Dorsolateral prefrontal cortex (tissue), 120 donors: ENCODE measurements at regions of chr2 and their contacts with region 1.

Region 1: DNA sequence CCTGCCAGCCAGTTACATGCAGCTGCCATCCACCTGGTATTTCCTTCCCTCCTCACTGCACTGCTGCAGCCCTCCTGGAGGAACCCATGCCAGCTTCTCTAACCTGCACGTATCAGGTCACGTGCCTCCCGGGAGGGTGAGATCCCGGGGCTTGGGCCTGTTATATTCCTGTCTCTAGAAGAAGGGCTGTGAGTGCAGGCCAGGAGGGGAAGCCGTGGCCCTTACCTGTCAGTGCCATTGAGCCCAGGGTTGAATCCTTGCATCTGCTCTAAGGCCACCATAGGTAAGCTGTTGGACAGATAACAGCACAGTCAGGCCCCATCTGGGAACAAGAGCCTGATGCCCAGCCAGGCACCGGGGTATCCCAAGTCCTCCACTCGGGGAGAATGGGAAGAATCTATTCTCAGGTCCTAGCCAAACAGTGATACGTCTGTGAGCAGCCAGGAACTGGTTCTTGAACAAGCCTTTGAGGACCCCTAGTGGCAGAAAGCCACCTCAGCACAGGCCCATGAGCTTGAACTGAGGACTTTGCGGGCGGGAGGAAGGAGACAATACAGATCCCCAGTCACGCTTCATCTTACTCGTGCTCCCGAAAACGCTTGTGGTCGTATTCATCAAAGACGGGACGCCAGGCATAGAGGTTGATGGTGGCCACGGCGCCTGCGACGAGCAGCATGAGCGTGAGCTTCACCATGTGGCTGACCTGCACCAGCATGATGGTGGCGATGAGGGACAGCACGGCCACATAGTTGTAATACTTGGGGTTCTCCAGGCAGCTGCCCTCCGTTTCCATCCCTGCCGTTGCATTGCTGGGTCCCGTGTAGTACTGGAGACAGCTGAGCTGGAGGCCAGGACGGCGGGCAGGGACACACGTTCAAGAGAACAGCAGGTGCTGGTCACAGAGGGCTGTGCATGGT is 34.4 kb downstream of the CENPO start:
- DNase-seq: peak; percentile 71 to 94 (median 86)
- H3K4me3 ChIP-seq: peak overlapping the region in 32 of 59 donors; percentile 4 to 50 (median 22)
- H3K27ac ChIP-seq: peak overlapping the region in 53 of 59 donors; percentile 1 to 85 (median 66)
- H3K27me3 ChIP-seq: no peaks in the 10 kb centered on the region
- CTCF ChIP-seq: peak; percentile 77 to 96 (median 91)

Region 2: GRCh38 chr2:24409700-24410556 is 417.7 kb before region 1 on chr2:
- intact Hi-C with region 1: loop called (anchors 1 to 5 kb)
- DNase-seq: peak in 3 of 10 donors; percentile 30 to 58 (median 43)
- H3K4me3 ChIP-seq: no peak overlapping the region
- H3K27ac ChIP-seq: no peak overlapping the region
- H3K27me3 ChIP-seq: no peaks in the 10 kb centered on the region
- CTCF ChIP-seq: peak; percentile 59 to 94 (median 86)

Region 3: DNA sequence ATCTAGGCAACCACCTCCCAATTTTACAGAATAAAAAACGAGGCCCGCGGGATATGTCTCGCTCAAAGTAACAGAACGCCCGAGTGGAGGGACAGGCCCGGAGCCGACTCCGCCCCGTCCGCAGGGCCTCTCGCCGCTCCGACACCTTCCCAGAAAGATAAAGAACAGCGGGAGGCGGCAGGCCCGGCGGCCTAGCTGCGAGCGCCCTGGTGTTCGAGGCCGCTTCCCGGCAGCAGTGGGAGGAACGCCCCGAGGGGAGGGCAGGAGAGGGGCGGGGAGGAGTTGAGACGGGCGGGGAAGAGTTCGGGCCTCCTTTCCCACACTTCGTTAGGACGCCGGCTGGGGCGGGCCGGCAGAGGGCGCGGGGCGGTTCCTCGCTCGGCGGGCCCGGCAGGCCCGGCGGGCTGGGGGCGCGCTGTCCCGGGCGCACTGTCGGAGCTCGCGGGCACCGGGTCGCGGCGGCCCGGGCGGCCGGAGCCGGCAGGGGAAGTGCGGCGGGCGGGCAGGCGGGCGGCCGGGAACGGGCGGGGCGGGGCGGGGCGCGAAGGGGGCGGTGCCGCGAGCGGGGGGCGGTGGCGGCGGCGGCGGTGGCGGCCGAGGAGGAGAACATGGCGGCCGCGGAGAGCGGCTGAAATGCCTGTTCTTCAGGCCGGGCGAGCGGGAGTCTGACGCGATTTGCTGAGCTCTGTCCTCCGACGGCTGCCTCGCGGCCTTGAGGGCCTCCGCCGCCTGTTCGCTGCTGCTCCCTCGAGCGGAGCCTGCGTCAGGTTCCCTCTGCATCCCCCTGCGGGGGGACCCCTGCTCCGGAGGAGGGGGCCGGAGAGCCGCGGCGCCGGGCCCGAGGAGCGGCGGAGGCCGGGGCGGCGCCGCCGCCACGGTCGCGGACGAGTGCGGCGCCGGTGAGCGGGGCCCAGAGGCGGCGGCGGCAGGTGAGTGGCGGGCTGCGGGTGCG is 336.6 kb before region 1 on chr2 and contains the start of gene NCOA1:
- intact Hi-C with region 1: loop called in 1 of 2 experiments (anchors 10 kb)
- DNase-seq: peak; percentile 73 to 92 (median 86)
- H3K4me3 ChIP-seq: peak within 1 kb of the TSS; percentile 60 to 94 (median 82)
- H3K27ac ChIP-seq: peak within 1 kb of the TSS; percentile 70 to 99 (median 96)
- H3K27me3 ChIP-seq: no peaks in the 10 kb centered on the region
- CTCF ChIP-seq: peak in 32 of 56 donors; percentile 8 to 64 (median 32)
- total RNA-seq, gene NCOA1: 72.6 to 141 (median 104) TPM

Region 4: DNA sequence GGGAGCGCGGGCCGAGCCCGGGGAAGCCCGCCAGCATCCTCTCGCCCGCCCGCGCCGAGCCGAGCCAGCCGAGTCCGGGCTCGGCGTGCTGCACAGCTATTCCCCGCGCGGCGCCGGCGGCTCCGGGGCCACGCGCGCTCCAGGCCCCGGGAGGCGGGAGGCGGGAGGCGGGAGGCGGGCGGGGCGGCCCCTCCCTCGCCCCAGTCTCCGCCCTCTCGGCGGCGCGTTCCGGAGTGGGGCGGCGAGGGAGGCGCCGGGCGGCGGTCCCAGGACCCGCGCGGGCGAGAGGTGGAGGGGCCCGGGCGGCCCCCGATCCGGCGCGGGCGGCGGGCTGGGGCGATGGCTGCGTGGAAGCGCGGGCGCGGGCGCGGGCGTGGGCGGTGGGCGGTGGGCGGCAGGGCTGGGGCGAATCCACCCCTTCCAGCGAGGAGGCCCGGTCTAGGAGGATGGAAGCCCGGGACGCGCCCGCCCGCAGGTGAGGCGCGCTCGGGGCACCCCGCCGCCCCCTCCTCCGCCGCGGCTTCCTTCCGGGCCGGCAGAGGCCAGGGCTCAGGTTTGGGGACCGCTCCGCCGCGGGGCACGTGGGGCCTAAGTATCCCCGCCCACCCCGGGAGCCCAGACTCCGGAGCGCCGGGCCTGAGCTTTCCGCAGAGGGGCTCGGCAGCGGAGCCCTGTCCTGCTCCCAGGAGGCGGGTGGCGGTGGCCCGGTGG is 92.7 kb after region 1 on chr2 and contains the start of gene ADCY3:
- intact Hi-C with region 1: loop called in 1 of 2 experiments (anchors 5 kb)
- DNase-seq: peak in 6 of 10 donors; percentile 56 to 81 (median 64)
- H3K4me3 ChIP-seq: peak within 1 kb of the TSS; percentile 57 to 86 (median 73)
- H3K27ac ChIP-seq: peak within 1 kb of the TSS in 56 of 59 donors; percentile 5 to 88 (median 74)
- H3K27me3 ChIP-seq: no peaks in the 10 kb centered on the region
- CTCF ChIP-seq: no peak
- total RNA-seq, gene ADCY3: 67.4 to 150 (median 95.0) TPM

Region 5: GRCh38 chr2:24971536-24972314 is 144.1 kb after region 1 on chr2 and contains the start of gene DNAJC27:
- intact Hi-C with region 1: loop called in 1 of 2 experiments (anchors 2 kb)
- DNase-seq: peak; percentile 95 to 99 (median 98)
- H3K4me3 ChIP-seq: peak within 1 kb of the TSS; percentile 61 to 98 (median 91)
- H3K27ac ChIP-seq: peak within 1 kb of the TSS; percentile 96 to 100 (median 99)
- H3K27me3 ChIP-seq: no peaks in the 10 kb centered on the region
- CTCF ChIP-seq: peak in 26 of 56 donors; percentile 4 to 45 (median 18)
- total RNA-seq, gene DNAJC27: 10.6 to 31.2 (median 20.7) TPM

Region 6: GRCh38 chr2:25197336-25198208 is 370.0 kb after region 1 on chr2:
- intact Hi-C with region 1: loop called in 1 of 2 experiments (anchors 10 kb)
- DNase-seq: no peak
- H3K4me3 ChIP-seq: peak overlapping the region in 1 of 59 donors; percentile 6
- H3K27ac ChIP-seq: peak overlapping the region in 7 of 59 donors; percentile 0 to 71 (median 37)
- H3K27me3 ChIP-seq: no peaks in the 10 kb centered on the region
- CTCF ChIP-seq: no peak